Activated T-helper 2 cell treated with anti-CD3 and anti-CD28 coated beads, Interferon-gamma antibody, Interleukin-2, Interleukin-4, amounts not matched to agents 10 μg/mL and 5 μg/mL and 100 μg/mL, durations not matched to agents 14 hours and 24 hours and 36 hours (primary cell): ENCODE measurements at regions of chr19 and their contacts with region 1.

Region 1: GRCh38 chr19:23758187-23759074 is at the start of gene ZNF681:
- DNase-seq: peak; percentile 80
- H3K4me3 Mint-ChIP-seq: peak within 1 kb of the TSS; percentile 92
- H3K27ac Mint-ChIP-seq: peak within 1 kb of the TSS; percentile 92
- H3K4me1 Mint-ChIP-seq: peaks cover 10% of the 10 kb centered on the region
- H3K27me3 Mint-ChIP-seq: no peaks in the 10 kb centered on the region
- total RNA-seq, gene ZNF681: 3.1 and 3.5 TPM in 2 replicates

Region 2: GRCh38 chr19:23249911-23250649 is 508.4 kb before region 1 on chr19 and contains the start of gene ZNF724:
- intact Hi-C with region 1: loop called (anchors 1 kb)
- DNase-seq: peak; percentile 89
- H3K4me3 Mint-ChIP-seq: peak within 1 kb of the TSS; percentile 97
- H3K27ac Mint-ChIP-seq: peak within 1 kb of the TSS; percentile 97
- H3K4me1 Mint-ChIP-seq: peaks cover 1% of the 10 kb centered on the region
- H3K27me3 Mint-ChIP-seq: no peaks in the 10 kb centered on the region
- total RNA-seq, gene ZNF724: 12.1 TPM in 2 replicates

Region 3: GRCh38 chr19:23395041-23395721 is 363.2 kb before region 1 on chr19 and contains the start of gene ZNF91:
- intact Hi-C with region 1: loop called (anchors 10 kb)
- DNase-seq: peak; percentile 89
- H3K4me3 Mint-ChIP-seq: peak within 1 kb of the TSS; percentile 97
- H3K27ac Mint-ChIP-seq: peak within 1 kb of the TSS; percentile 98
- H3K4me1 Mint-ChIP-seq: no peaks in the 10 kb centered on the region
- H3K27me3 Mint-ChIP-seq: no peaks in the 10 kb centered on the region
- total RNA-seq, gene ZNF91: 26.5 and 27.2 TPM in 2 replicates

Region 4: DNA sequence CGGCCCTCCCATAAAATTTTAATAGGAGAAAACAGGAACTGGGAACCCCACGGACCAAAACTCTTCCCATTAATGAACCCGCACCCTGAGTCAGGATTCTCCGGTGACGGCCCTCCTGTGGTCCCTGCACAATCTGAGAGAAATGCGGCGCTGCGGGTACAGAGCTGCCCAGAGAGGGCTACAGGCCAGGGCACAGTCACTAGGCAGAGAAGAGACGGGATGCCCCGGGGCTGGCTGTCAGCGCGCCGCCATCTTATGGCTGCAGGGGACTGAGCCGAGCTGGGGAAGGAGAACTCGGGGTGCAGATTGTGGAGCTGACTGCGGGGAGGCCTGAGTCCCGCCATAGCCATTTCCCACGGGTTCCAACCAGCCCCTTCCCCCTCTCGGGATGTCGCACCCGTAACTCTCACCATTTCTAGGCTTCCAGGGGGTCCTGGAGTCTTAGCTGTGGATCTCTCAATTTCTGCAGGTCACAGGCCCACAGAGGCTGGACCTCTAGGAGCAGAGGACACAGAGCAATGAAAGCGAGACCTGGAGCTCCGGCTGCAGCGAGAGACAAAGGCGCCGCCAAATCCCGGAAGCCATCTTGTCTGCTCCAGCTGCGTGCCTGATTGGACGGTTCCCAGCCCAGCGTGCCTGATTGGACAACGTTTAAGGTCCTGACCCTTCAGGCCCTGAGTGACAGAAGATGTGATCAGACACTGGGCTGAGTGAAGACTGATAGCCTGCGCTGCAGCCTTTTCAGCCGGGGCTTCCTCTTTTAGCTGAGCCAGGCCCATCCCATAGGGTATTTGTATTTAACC is 71.6 kb before region 1 on chr19 and contains the start of gene ZNF675:
- intact Hi-C with region 1: loop called (anchors 2 kb)
- DNase-seq: peak; percentile 84
- H3K4me3 Mint-ChIP-seq: peak within 1 kb of the TSS; percentile 91
- H3K27ac Mint-ChIP-seq: peak within 1 kb of the TSS; percentile 96
- H3K4me1 Mint-ChIP-seq: peaks cover 4% of the 10 kb centered on the region
- H3K27me3 Mint-ChIP-seq: no peaks in the 10 kb centered on the region
- total RNA-seq, gene ZNF675: 17.1 and 17.7 TPM in 2 replicates

Region 5: GRCh38 chr19:23867895-23868294 is 109.5 kb after region 1 on chr19:
- intact Hi-C with region 1: no loop called
- DNase-seq: no peak
- H3K4me3 Mint-ChIP-seq: no peak overlapping the region
- H3K27ac Mint-ChIP-seq: no peak overlapping the region
- H3K4me1 Mint-ChIP-seq: no peaks in the 10 kb centered on the region
- H3K27me3 Mint-ChIP-seq: no peaks in the 10 kb centered on the region

Region 6: DNA sequence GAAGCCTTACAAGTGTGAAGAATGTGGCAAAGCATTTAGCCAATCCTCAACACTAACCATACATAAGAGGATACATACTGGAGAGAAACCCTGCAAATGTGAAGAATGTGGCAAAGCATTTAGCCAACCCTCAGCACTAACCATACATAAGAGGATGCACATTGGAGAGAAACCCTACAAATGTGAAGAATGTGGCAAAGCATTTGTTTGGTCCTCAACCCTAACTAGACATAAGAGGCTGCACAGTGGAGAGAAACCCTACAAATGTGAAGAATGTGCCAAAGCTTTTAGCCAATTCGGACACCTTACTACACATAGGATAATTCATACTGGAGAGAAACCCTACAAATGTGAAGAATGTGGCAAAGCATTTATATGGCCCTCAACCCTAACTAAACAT is 174.4 kb after region 1 on chr19:
- intact Hi-C with region 1: no loop called
- DNase-seq: no peak
- H3K4me3 Mint-ChIP-seq: no peak overlapping the region
- H3K27ac Mint-ChIP-seq: no peak overlapping the region
- H3K4me1 Mint-ChIP-seq: no peaks in the 10 kb centered on the region
- H3K27me3 Mint-ChIP-seq: no peaks in the 10 kb centered on the region